ENCODE measurements at regions of chr6 and their contacts with region 1.

Region 1: DNA sequence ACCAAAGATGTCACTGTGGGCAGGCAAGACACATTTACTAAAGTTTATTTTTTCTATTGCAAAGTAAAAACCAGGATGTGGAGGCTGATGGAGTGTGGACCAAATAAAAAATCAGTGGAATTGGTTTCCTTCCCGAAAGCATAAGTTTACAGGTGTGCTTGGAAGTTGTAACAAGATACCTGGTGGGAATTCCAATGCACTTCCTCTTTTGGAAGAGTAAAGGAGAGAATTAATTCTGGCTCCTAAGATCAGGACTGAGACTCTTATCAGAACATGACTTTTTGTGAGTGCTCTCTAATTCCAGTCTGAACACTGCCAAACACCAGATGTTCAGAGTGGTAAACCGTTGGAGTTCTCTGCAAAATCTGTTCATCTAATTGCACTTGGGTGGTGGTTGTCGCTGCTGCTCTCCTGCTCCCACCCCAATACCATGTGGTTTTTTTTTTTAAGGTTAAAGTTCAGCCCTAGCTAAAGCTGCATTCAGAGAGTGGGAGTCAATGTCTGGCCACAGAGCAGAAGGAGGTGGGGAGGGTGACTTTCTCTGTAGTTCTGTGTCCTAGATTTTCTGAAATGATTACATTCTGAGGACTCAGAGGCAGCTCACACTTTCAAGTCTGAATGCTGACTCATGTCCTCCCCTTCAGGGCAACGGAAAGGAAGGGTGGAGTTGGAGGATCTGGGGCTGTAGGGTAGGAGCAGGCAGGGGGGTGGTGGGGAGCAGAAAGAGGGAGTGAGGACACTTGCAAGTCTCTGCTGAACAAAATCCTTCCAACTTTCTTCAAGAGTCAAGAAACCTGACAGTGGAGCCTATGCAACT is 275.8 kb upstream of the PRDM1 start:
- DNase-seq: peak; percentile 74
- H3K4me3 Mint-ChIP-seq: no peak overlapping the region
- H3K27ac Mint-ChIP-seq: no peak overlapping the region
- H3K4me1 Mint-ChIP-seq: peaks cover 33% of the 10 kb centered on the region
- H3K27me3 Mint-ChIP-seq: no peaks in the 10 kb centered on the region

Region 2: DNA sequence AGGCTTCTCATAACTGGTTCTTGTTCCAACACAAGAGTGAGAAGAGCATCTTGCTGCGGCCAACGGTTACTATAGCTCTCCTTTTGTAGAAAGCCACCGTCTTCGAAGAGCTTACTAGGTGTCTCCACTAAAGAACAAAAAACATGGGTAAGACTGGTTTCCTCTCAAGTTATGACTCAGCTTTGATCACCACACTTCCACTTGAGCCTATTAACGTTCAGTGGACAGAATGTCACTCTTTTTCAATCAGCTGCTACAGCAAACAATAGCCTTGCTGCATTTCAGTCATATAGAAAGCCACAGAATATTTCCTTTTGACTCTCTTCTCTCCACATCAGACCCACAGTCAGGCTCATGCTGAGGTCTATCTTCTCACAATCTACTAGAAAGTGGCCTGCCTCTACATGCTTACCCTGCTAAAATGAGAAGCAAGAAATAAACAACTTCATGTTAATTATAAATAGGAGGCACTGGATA is 163.9 kb before region 1 on chr6:
- CTCF ChIA-PET with region 1: no interaction called
- intact Hi-C with region 1: loop called (anchors 5 kb)
- DNase-seq: peak; percentile 35
- H3K4me3 Mint-ChIP-seq: no peak overlapping the region
- H3K27ac Mint-ChIP-seq: no peak overlapping the region
- H3K4me1 Mint-ChIP-seq: peaks cover 46% of the 10 kb centered on the region
- H3K27me3 Mint-ChIP-seq: peaks cover 20% of the 10 kb centered on the region

Region 3: GRCh38 chr6:105781248-105781647 is 29.1 kb before region 1 on chr6:
- CTCF ChIA-PET with region 1: no interaction called
- intact Hi-C with region 1: loop called (anchors 1 kb)
- DNase-seq: peak; percentile 77
- H3K4me3 Mint-ChIP-seq: no peak overlapping the region
- H3K27ac Mint-ChIP-seq: no peak overlapping the region
- H3K4me1 Mint-ChIP-seq: peaks cover 34% of the 10 kb centered on the region
- H3K27me3 Mint-ChIP-seq: no peaks in the 10 kb centered on the region

Region 4: DNA sequence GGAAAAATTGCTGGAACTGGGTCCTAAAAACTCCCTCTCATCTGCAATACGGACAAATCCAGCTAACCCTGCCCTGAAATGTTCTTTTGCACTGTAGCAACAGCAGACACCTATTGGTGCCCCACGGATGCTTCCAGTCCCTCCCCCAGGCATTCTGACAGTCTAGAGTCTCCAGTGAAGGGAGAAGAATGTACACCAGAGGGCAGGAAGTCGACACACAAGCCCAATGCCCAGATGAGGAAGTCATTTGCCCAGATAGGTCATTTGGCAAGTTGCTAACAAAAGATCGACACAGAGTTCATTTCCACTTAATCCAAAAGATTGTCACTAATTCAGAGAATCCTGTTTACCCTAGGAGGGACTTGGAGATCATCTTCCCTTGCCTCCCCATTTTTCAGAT is 17.2 kb before region 1 on chr6:
- CTCF ChIA-PET with region 1: interaction called, 3 read pairs
- intact Hi-C with region 1: loop called (anchors 1 kb)
- DNase-seq: peak; percentile 30
- H3K4me3 Mint-ChIP-seq: no peak overlapping the region
- H3K27ac Mint-ChIP-seq: no peak overlapping the region
- H3K4me1 Mint-ChIP-seq: peaks cover 43% of the 10 kb centered on the region
- H3K27me3 Mint-ChIP-seq: no peaks in the 10 kb centered on the region

Region 5: DNA sequence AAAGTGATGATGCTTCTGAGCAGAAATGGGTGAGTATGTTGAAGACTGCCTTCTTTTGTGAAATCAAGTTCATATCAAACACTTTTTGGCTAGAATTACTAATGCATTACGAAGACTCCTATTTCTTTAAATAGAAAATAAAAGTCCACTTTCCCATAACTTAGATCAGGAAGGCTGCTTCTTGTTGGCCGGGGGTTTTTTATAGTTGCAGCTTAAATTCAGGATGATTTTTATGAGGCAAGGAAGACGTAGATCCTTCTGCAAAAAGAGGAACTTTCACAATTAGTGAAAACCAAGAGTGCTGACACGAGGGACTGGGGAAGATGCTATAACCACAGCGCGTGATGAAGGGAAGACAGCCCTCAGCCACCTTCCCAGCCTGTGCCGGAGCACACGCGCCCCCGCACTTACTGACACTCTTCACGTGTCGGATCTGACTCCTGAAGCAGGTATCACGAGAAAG is 69.7 kb after region 1 on chr6:
- CTCF ChIA-PET with region 1: no interaction called
- intact Hi-C with region 1: loop called (anchors 2 kb)
- DNase-seq: peak; percentile 74
- H3K4me3 Mint-ChIP-seq: peak overlapping the region; percentile 11
- H3K27ac Mint-ChIP-seq: peak overlapping the region; percentile 78
- H3K4me1 Mint-ChIP-seq: peaks cover 25% of the 10 kb centered on the region
- H3K27me3 Mint-ChIP-seq: peaks cover 30% of the 10 kb centered on the region

Region 6: GRCh38 chr6:105952772-105953690 is 142.7 kb after region 1 on chr6:
- CTCF ChIA-PET with region 1: no interaction called
- intact Hi-C with region 1: no loop called
- DNase-seq: no peak
- H3K4me3 Mint-ChIP-seq: no peak overlapping the region
- H3K27ac Mint-ChIP-seq: no peak overlapping the region
- H3K4me1 Mint-ChIP-seq: no peaks in the 10 kb centered on the region
- H3K27me3 Mint-ChIP-seq: no peaks in the 10 kb centered on the region

Region 7: DNA sequence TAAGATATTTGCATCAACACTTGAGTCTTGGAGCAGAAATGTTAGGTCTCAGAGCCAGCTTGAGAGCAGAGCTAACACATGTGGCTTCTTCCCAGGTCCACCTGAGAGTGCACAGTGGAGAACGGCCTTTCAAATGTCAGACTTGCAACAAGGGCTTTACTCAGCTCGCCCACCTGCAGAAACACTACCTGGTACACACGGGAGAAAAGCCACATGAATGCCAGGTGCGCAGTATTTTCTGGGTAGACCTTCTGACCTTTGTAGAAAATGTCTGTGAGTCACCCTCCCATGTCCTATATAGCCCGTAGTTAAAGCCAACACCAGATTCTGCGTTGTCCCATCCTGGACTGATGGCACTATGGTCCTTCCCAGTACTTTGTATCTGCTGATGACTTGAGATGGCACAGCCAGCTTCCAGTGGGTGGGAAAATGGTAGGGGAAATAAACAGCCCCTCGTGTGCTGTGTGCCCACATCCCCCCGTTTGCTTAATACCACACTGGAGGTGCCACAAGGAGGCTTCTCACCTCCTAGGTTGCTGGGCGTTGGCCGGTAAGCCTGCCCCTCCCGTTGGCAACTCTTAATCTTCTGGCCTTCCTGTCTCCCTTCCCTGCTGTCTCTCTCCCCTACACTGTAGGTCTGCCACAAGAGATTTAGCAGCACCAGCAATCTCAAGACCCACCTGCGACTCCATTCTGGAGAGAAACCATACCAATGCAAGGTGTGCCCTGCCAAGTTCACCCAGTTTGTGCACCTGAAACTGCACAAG is 296.1 kb after region 1 on chr6:
- CTCF ChIA-PET with region 1: no interaction called
- intact Hi-C with region 1: no loop called
- DNase-seq: no peak
- H3K4me3 Mint-ChIP-seq: no peak overlapping the region
- H3K27ac Mint-ChIP-seq: no peak overlapping the region
- H3K4me1 Mint-ChIP-seq: peaks cover 31% of the 10 kb centered on the region
- H3K27me3 Mint-ChIP-seq: peaks cover 8% of the 10 kb centered on the region

Region 8: GRCh38 chr6:106677282-106677681 is 867.0 kb after region 1 on chr6:
- CTCF ChIA-PET with region 1: no interaction called
- intact Hi-C with region 1: no loop called
- DNase-seq: no peak
- H3K4me3 Mint-ChIP-seq: no peak overlapping the region
- H3K27ac Mint-ChIP-seq: no peak overlapping the region
- H3K4me1 Mint-ChIP-seq: no peaks in the 10 kb centered on the region
- H3K27me3 Mint-ChIP-seq: no peaks in the 10 kb centered on the region

Measured in activated naive CD4-positive, alpha-beta T cell treated with anti-CD3 and anti-CD28 coated beads for 36 hours (primary cell).